ENCODE measurements at regions of chr5 and their contacts with region 1.

Region 1: DNA sequence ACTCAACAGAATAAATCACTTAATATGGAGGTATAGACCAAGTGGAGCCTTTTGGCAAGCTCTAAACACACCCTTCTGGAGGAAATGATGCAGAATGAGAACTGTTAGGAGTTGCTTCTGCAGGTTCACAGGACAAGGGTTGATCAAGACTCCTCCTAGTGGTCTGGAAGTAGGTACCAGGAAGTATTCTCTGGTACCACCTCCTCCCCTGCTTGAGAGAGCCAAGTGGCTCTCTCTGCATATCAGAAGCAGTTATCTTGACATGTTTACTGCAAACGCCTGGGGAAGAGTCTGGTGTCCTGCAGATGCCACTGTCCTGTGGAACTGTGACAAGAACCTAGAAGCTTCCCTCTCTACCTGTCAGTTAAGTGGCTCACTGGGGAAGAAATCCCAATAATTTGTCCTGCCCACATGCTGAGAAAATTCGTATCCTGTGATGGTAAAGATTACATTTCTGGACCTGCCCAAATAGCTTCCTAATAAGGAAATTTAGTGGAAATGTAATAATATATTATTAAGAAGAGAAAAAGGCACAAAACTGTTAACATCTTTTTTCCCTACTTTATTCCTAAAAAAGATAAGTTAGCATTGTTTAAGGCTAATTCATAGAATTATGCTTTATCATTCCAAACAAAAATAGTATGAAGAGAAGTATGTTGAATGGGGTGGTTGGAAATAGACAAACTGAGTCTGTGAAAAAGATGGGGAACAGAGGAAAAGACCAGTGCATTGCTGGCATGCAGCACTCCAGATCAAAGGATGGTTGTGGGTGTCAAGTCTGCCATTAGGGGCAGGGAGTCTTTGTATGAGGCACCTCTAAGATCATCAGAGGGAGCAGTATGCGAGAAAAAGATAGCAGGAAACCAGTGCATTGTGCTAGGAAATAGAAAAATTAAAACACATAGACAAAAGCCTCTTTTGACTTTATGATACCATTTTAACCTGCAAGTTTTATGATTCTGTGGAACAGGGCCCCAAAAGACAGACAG is 118.8 kb downstream of the CDC42SE2 start:
- DNase-seq: peak; percentile 36
- CTCF ChIP-seq: peak; percentile 63

Region 2: GRCh38 chr5:131165119-131165727 is 217.5 kb before region 1 on chr5 and contains the start of gene HINT1:
- in situ Hi-C with region 1: loop called (anchors 10 kb)
- DNase-seq: peak; percentile 96
- CTCF ChIP-seq: peak; percentile 56

Region 3: GRCh38 chr5:131281133-131281867 is 101.4 kb before region 1 on chr5:
- in situ Hi-C with region 1: loop called (anchors 10 kb)
- DNase-seq: peak; percentile 50
- CTCF ChIP-seq: no peak